Mammary epithelial cell (primary cell): ENCODE measurements at regions of chr19 and their contacts with region 1.

Region 1: GRCh38 chr19:4638828-4639530 is at the start of gene TNFAIP8L1:
- DNase-seq: peak; percentile 90
- H3K4me3 ChIP-seq: peak within 1 kb of the TSS; percentile 73 to 80 (median 77)
- H3K27ac ChIP-seq: peak within 1 kb of the TSS; percentile 15
- H3K4me1 ChIP-seq: peaks cover 40% of the 10 kb centered on the region
- H3K27me3 ChIP-seq: no peaks in the 10 kb centered on the region
- CTCF ChIP-seq: no peak
- total RNA-seq, gene TNFAIP8L1: 2.3 to 7.3 TPM

Region 2: DNA sequence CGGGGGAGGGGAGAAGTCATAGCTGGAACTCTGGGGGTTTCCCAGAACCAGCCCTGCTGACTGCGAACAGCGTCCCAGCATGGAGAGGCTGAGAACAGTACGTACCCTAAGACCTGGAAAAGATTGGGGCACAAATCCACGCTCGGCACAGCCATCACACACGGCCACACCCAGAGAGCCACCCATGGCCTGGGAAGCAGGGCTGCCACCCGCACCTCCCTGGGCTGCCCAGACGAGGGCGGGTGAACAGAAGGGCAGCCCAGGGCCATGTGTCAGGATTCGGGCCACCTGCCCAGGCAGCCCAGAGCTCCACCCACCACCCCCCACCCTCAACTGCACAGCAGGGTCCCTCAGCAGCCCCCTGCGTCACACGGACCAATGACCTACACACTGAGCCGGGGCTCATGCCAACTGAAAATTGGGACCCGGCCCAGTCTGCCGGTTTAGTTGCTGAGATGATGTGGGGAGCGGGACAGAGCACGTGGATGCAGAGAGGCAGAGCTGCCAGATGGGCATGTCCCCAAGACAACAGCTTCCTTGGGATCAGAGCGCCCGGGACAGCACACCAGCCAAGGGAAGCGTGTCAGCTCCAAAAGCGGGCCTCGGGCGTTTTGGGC is 189.8 kb before region 1 on chr19:
- CTCF ChIA-PET with region 1: no interaction called
- dilution Hi-C with region 1: loop called (anchors 10 kb)
- in situ Hi-C with region 1: no loop called
- intact Hi-C with region 1: no loop called
- DNase-seq: no peak
- H3K4me3 ChIP-seq: no peak overlapping the region
- H3K27ac ChIP-seq: no peak overlapping the region
- H3K4me1 ChIP-seq: no peaks in the 10 kb centered on the region
- H3K27me3 ChIP-seq: no peaks in the 10 kb centered on the region
- CTCF ChIP-seq: no peak

Region 3: GRCh38 chr19:4576016-4576933 is 62.7 kb before region 1 on chr19:
- CTCF ChIA-PET with region 1: interaction called, 3 read pairs
- dilution Hi-C with region 1: no loop called
- in situ Hi-C with region 1: loop called (anchors 5 to 10 kb)
- intact Hi-C with region 1: loop called (anchors 1 kb)
- DNase-seq: no peak
- H3K4me3 ChIP-seq: no peak overlapping the region
- H3K27ac ChIP-seq: no peak overlapping the region
- H3K4me1 ChIP-seq: peaks cover 11% of the 10 kb centered on the region
- H3K27me3 ChIP-seq: peaks cover 9% of the 10 kb centered on the region
- CTCF ChIP-seq: peak; percentile 51 to 79

Region 4: DNA sequence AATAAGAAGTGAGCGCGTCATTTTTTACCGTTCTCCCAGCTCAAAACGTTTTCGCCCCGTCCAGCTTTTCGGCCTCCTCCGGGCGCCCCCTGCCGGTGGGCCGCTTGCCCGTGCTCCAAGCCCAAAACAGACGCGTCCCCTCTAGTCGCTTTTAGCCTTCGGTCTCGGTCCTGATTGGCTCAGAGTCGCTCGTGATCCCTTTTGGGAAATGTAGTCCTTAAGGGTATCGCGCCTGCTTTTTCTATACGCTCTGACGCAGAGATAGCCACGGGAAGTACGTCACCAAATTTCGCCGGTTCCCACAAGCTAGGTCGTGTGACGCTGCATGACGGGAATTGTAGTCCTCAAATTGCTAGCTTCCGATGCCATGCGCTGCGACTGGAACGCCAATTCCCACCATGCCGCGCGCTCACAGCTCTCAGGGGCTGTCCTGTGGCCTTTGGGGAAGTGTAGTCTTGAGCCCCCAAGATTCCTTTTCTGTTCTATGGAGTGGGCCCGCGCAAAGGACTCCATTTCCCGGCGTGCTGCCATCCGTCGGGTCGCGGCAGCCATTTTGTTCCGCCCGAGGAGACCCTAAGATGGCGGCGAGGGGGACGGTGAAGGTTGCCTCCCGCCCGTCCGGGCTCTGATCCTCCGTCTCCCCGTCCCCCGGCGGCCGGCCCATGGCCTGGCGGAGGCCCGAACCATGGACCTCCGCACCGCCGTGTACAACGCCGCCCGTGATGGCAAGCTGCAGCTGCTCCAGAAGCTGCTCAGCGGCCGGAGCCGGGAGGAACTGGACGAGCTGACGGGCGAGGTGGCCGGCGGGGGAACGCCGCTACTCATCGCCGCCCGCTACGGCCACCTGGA is 152.4 kb after region 1 on chr19 and contains the start of gene FEM1A:
- CTCF ChIA-PET with region 1: no interaction called
- dilution Hi-C with region 1: no loop called
- in situ Hi-C with region 1: no loop called
- intact Hi-C with region 1: loop called (anchors 2 kb)
- DNase-seq: peak; percentile 100
- H3K4me3 ChIP-seq: peak within 1 kb of the TSS; percentile 68 to 89 (median 77)
- H3K27ac ChIP-seq: peak within 1 kb of the TSS; percentile 78
- H3K4me1 ChIP-seq: peaks cover 39% of the 10 kb centered on the region
- H3K27me3 ChIP-seq: no peaks in the 10 kb centered on the region
- CTCF ChIP-seq: peak; percentile 98 to 99
- total RNA-seq, gene FEM1A: 12.8 to 17.5 TPM